Right ventricle myocardium superior (tissue), 1 donor: ENCODE measurements at regions of chr2 and their contacts with region 1.

Region 1: GRCh38 chr2:101151141-101151858 is at the start of gene TBC1D8:
- DNase-seq: peak; percentile 92
- ATAC-seq: peak; percentile 89
- total RNA-seq, gene TBC1D8: 51.4 TPM

Region 2: DNA sequence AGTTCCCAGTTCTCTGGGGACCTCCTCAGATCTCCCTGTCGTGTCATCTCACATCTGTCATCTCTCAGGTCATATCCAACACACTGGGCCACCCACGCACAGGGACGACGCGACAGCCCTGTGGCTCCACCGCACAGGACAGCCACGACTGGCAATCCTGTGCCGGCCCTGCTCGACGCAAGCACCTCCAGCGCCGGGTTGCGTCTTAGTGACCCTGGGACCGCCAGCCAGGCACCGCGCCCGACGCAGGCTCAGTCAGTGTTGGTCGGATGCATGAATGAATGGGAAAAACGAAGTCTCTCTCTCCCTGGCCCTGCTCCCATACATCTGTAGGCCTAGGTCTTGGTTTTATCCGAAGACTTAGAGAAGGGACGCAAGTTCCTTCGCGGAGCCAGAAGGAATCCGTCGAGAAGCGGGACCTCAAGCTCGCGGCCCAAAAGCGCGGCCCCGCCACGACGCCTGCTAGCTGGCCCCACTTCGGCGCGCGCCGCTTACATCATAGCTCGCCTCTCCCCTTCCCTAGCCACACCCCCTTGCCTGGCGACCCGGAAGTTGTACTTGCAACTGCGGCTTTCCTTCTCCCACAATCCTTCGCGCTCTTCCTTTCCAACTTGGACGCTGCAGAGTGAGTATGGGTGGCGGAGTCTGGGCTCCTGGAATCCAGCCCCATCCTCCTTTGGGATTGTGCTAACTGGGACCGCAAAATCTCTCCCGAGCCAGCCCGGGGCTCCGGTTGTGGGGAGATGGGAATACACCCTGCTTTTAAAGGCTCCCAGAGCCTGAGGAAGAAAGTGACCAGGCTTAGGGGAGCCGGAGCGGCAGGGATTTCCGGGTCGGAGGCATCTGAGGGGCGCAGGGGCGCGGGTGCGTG is 149.4 kb before region 1 on chr2 and contains the start of gene RPL31:
- intact Hi-C with region 1: no loop called
- DNase-seq: peak; percentile 98
- ATAC-seq: peak; percentile 97
- total RNA-seq, gene RPL31: 756 TPM

Region 3: DNA sequence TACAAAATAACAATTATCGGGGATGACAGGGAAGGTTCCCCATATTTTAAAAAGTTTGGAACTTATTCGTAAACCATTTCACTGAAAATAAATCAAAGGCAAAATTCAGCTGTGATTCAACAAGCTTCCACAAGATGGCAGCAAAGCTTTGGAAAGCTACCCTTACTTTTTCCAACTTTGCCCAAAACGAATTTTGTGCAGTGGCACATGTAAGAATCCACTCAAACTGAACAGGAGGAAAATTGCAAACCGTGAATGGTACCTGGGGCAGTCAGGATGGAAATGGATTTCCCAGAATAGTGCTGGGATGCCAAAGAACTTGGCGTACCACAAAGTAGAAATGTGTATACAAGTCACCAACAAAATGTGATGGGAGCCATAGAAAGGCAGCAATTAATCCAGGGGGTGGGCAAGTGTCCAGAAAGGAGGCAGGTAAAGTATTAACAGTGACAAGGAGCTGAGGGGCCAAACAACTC is 138.6 kb before region 1 on chr2:
- intact Hi-C with region 1: loop called (anchors 2 kb)
- DNase-seq: no peak
- ATAC-seq: peak; percentile 15

Region 4: DNA sequence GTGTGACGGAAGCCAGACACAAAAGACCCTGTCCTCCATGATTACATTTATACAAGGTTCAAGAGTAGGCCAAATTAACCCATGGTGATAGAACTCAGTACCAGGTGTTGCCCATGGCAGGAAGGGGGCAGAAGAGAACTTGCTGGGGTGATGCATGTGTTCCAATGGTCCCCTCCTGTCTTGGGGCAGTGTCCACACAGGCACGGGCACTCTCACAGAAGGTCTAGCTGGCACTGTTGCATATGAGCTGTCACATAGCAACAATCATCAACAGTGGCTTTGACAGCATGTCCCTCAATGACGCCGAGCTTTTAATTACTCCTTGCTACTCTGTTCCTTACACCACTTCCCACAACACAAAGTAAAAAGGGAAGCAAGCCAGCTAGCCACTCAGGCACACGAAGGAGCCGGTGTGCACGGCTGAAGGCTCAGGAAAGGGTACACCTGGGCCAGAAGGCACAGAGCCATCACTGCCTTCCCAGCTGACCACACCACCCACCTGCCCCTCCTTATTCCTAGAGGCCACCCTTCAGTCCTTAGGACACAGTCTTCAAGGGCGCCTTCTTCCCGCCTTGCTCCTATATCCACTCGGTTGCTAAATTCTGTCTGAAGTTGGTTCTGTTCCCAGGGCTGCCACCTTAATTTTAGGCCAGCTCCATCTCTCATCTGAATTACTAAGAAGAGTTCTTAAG is 120.3 kb before region 1 on chr2:
- intact Hi-C with region 1: loop called (anchors 5 kb)
- DNase-seq: no peak
- ATAC-seq: peak; percentile 92

Region 5: DNA sequence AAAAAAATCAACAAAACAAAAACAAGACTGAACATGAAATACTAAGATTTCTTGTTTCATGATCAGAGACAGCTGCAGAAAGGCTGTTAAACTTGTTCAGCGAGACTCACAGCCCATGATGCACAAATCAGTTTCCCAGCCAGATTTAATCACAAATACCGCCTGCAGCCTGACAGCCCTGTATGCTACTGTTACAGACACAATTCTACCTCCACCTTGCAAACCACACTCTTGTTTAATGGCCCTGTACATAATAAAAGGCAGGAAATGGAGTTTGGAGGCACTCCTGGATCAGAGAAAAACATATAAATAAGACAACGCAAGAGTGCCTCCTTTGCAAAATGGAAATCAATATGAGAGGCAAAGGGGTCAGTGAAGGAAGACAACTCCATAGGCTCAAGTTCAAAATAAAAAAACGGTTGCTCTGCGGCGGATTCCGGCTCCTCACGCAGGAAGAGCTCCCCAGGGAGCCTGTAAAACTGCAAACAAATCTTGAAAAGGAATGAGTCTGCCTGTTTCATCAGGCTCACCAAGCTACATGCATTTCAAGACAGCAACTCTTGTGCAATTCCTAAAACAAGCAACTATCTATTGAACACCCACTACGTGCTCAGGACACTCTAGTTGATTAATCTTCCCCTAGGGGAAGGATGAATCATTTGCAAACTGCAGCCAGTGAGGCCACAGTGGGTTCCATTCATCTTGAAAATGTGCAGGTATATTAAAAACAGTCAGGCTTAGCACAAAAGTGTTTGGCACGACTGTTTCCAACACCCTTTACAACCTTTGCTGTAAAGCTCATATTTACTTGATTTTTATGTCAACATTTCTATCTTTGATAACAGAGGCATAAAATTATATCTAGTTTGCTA is 37.7 kb before region 1 on chr2:
- intact Hi-C with region 1: loop called (anchors 5 kb)
- DNase-seq: no peak
- ATAC-seq: no peak

Region 6: GRCh38 chr2:101223814-101224231 is 72.5 kb after region 1 on chr2:
- intact Hi-C with region 1: no loop called
- DNase-seq: no peak
- ATAC-seq: no peak

Region 7: DNA sequence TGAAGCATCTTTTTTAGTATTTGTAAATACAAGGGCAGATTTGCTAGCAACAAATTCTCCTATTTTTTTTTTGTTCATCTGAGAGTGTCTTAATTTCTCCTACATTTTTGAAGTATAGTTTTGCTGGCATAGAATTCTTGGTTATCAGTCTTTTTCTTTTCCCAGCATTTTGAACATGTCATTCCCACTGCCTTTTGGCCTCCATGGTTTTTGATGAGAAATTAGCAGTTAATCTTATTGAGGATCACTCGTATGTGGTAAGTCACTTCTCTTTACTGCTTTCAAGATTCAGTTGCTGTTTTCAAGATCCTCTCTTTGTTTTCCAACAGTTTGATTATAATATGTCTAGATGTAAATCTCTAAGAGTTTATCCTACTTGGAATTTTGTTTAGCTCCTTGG is 174.1 kb after region 1 on chr2:
- intact Hi-C with region 1: no loop called
- DNase-seq: no peak
- ATAC-seq: no peak